ENCODE measurements at regions of chr11 and their contacts with region 1.

Region 1: GRCh38 chr11:22787551-22788162 is 41.9 kb downstream of the SVIP start:
- H3K4me3 Mint-ChIP-seq: no peak overlapping the region
- H3K27ac Mint-ChIP-seq: no peak overlapping the region
- H3K4me1 Mint-ChIP-seq: no peaks in the 10 kb centered on the region
- H3K27me3 Mint-ChIP-seq: no peaks in the 10 kb centered on the region

Region 2: GRCh38 chr11:22244986-22245592 is 542.6 kb before region 1 on chr11:
- intact Hi-C with region 1: loop called (anchors 5 kb)
- H3K4me3 Mint-ChIP-seq: no peak overlapping the region
- H3K27ac Mint-ChIP-seq: no peak overlapping the region
- H3K4me1 Mint-ChIP-seq: no peaks in the 10 kb centered on the region
- H3K27me3 Mint-ChIP-seq: no peaks in the 10 kb centered on the region

Region 3: GRCh38 chr11:22337596-22338485 is 449.8 kb before region 1 on chr11 and contains the start of gene SLC17A6:
- intact Hi-C with region 1: loop called (anchors 1 kb)
- H3K4me3 Mint-ChIP-seq: no peak within 1 kb of the TSS
- H3K27ac Mint-ChIP-seq: no peak within 1 kb of the TSS
- H3K4me1 Mint-ChIP-seq: no peaks in the 10 kb centered on the region
- H3K27me3 Mint-ChIP-seq: peaks cover 54% of the 10 kb centered on the region

Region 4: GRCh38 chr11:22774716-22775115 is 12.9 kb before region 1 on chr11:
- intact Hi-C with region 1: no loop called
- H3K4me3 Mint-ChIP-seq: no peak overlapping the region
- H3K27ac Mint-ChIP-seq: no peak overlapping the region
- H3K4me1 Mint-ChIP-seq: peaks cover 6% of the 10 kb centered on the region
- H3K27me3 Mint-ChIP-seq: no peaks in the 10 kb centered on the region